ENCODE measurements at regions of chr18 and their contacts with region 1.

Region 1: DNA sequence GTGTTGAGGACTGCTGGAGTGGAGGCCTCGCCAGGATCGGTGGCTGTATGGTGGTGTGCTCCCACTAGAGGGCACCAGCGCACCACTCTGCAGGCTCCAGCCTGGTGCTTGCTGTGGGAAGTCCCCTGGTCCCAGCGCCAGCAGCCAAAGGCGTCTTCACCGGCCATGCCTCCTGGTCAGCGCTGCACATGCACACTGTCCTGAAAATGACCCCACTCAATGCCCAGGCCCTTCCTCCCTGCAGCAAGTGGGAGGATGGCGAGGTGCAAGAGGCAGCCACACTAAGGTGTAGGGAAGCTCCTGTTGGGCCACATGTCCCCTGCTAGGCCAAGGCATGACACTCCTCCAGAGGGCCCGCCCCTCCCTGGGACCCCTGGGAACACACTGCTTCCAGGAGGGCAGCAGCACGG is 136.5 kb downstream of the CTIF start:
- DNase-seq: peak; percentile 81
- H3K4me3 Mint-ChIP-seq: no peak overlapping the region
- H3K27ac Mint-ChIP-seq: no peak overlapping the region
- H3K4me1 Mint-ChIP-seq: no peaks in the 10 kb centered on the region
- H3K27me3 Mint-ChIP-seq: no peaks in the 10 kb centered on the region
- CTCF ChIP-seq: peak; percentile 94

Region 2: DNA sequence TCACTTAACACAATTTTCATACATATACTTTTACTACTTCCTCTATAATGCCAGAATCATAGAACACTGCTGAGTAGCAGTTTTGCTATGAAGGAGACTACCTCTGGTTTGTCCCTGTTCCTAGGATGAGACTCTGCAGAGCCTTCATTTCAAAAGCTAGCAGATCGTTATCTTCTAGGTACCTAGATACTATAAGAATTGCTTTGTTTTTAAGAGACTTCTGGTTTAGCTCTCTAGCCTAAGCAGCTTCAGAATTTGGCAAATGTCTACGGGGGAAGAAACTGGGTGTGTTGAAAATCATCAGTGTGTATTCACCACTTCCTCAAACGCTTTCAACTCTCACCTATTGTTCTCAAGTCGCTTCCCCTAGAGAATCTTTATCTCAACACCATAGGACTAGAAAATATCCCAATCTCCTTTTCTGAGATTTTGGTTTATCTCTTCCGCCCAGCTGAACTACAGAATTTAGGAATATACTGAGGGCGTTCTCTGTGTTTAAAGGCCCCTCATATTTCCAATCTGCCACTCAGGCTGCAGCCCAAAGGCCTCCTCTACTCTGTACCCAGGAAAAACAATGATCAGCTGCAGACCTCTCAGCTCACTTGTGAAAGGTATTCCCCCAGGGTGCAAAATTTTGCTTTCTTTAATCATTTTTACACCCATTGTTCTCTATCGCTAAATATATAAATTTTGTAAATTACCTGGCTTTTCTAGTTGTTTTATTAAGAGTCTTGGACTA is 773.6 kb before region 1 on chr18:
- CTCF ChIA-PET with region 1: no interaction called
- POLR2A ChIA-PET with region 1: no interaction called
- intact Hi-C with region 1: no loop called
- DNase-seq: no peak
- H3K4me3 Mint-ChIP-seq: no peak overlapping the region
- H3K27ac Mint-ChIP-seq: no peak overlapping the region
- H3K4me1 Mint-ChIP-seq: peaks cover 30% of the 10 kb centered on the region
- H3K27me3 Mint-ChIP-seq: no peaks in the 10 kb centered on the region
- CTCF ChIP-seq: no peak

Region 3: GRCh38 chr18:48475635-48476549 is 199.5 kb before region 1 on chr18:
- CTCF ChIA-PET with region 1: interaction called, 21 read pairs
- POLR2A ChIA-PET with region 1: no interaction called
- intact Hi-C with region 1: no loop called
- DNase-seq: peak; percentile 71
- H3K4me3 Mint-ChIP-seq: no peak overlapping the region
- H3K27ac Mint-ChIP-seq: no peak overlapping the region
- H3K4me1 Mint-ChIP-seq: peaks cover 5% of the 10 kb centered on the region
- H3K27me3 Mint-ChIP-seq: peaks cover 16% of the 10 kb centered on the region
- CTCF ChIP-seq: peak; percentile 86

Region 4: DNA sequence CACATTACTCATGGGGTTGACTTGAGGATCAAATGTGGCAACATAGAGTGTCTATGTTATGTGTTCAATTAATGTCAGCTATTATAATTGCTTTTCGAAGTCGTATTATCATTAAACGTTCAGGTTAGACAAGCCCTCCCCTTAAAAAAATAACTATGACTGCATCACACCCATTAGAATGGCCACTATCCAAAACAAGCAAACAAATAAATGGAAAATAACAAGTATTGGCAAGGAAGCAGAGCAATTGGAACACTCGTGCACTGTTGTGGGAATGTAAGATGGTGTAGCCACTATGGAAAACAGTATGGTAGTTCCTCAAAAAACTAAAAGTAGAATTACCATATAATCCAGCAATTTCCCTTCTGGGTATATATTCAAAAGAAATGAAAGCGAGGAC is 146.5 kb before region 1 on chr18:
- CTCF ChIA-PET with region 1: no interaction called
- POLR2A ChIA-PET with region 1: no interaction called
- intact Hi-C with region 1: no loop called
- DNase-seq: no peak
- H3K4me3 Mint-ChIP-seq: no peak overlapping the region
- H3K27ac Mint-ChIP-seq: no peak overlapping the region
- H3K4me1 Mint-ChIP-seq: peaks cover 12% of the 10 kb centered on the region
- H3K27me3 Mint-ChIP-seq: peaks cover 30% of the 10 kb centered on the region
- CTCF ChIP-seq: no peak

Region 5: DNA sequence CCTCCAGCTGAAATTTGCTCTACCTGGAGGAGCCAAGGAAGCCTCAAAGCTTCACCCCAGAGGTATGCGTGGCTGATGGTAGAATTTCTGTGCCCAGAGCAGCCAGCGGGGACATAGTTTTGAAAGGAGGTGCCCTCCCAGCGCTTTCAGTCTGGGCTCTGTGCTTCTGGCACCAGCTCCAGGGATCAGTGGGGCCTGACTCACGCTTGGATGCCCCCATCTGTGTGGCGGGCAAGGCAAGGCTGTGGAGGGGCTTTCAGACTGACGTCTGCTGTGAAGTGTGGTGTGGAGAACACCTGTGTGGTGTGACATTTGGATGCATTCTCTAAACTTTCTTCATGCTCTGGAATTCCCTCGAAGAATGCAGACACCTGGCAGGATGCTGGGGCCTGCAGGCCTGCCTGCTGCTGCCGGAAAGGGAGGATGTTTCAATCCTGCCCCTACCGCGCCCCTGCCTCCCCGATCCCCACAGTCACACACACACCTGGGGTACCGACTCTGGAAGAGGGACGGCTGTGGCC is 52.4 kb before region 1 on chr18:
- CTCF ChIA-PET with region 1: no interaction called
- POLR2A ChIA-PET with region 1: no interaction called
- intact Hi-C with region 1: no loop called
- DNase-seq: peak; percentile 25
- H3K4me3 Mint-ChIP-seq: peak overlapping the region; percentile 16
- H3K27ac Mint-ChIP-seq: peak overlapping the region; percentile 87
- H3K4me1 Mint-ChIP-seq: peaks cover 54% of the 10 kb centered on the region
- H3K27me3 Mint-ChIP-seq: no peaks in the 10 kb centered on the region
- CTCF ChIP-seq: no peak

Region 6: GRCh38 chr18:48777026-48777743 is 101.8 kb after region 1 on chr18:
- CTCF ChIA-PET with region 1: interaction called, 3 read pairs
- POLR2A ChIA-PET with region 1: no interaction called
- intact Hi-C with region 1: loop called (anchors 10 kb)
- DNase-seq: peak; percentile 59
- H3K4me3 Mint-ChIP-seq: no peak overlapping the region
- H3K27ac Mint-ChIP-seq: no peak overlapping the region
- H3K4me1 Mint-ChIP-seq: peaks cover 4% of the 10 kb centered on the region
- H3K27me3 Mint-ChIP-seq: no peaks in the 10 kb centered on the region
- CTCF ChIP-seq: peak; percentile 84

Region 7: DNA sequence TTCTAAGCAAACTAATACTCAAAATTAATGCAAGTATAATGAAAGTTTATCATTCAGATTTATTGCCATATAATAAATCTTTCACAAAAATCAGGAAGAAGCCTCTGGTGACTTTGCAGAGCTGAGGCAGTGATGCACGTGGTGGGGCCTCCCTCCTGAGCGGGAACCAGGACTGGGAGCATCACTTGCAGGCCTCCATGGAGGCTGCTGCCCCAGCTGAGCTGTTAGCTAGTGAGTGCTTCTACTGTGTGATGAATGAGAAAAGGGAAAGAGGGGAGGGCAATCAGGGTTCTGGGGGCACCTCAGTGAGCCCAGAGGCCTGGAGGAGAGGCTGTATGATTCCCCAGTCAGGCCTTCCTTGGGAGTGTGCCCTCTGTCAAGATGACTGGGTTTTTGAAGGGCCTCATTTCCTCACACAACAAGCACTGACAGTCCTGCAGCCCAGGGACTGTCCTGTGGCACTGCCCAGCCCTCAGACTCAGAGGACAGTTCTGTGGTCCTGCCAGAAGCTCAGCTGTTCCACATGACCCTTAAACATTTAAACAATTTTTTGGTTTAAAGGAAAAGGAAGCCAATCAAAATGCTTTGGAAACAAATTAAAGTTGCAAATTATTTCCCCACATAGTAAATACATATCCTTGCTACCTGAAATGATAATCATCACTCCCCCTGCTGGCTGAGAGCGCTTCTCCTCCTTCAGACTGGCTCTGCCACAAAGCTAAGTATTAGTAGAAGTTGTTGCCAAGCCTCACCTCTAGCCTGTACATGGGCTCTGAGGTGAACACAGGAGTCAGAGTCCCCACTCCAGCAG is 366.3 kb after region 1 on chr18:
- CTCF ChIA-PET with region 1: interaction called, 8 read pairs
- POLR2A ChIA-PET with region 1: no interaction called
- intact Hi-C with region 1: loop called (anchors 5 kb)
- DNase-seq: peak; percentile 54
- H3K4me3 Mint-ChIP-seq: no peak overlapping the region
- H3K27ac Mint-ChIP-seq: no peak overlapping the region
- H3K4me1 Mint-ChIP-seq: no peaks in the 10 kb centered on the region
- H3K27me3 Mint-ChIP-seq: no peaks in the 10 kb centered on the region
- CTCF ChIP-seq: peak; percentile 52

Region 8: DNA sequence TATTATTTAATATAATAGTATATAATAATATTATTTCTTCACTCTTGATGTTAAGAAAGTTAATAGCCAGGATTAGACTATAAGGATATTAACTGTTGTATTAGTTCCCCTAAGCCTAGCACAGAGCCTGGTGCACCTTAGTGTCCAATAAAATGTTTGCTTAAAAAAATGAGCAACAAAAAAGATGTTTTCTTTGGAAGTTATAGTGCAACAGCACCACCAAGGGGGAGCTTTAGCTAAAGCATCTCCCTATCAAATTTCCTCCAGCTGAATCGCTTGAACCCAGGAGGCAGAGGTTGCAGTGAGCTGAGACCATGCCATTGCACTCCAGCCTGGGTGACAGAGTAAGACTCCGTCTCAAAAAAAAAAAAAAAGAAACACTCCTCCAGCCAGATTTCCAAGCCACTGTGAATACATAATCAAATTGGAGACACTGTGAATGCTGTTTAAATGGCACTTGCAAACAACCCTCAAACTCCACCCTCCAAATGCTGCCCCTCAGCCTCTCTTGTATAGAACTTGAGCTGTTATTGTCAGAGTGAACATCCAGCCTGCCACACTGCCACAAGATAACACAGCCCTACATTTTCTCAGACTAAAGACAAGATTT is 563.2 kb after region 1 on chr18:
- CTCF ChIA-PET with region 1: interaction called, 5 read pairs
- POLR2A ChIA-PET with region 1: no interaction called
- intact Hi-C with region 1: loop called (anchors 1 kb)
- DNase-seq: peak; percentile 48
- H3K4me3 Mint-ChIP-seq: no peak overlapping the region
- H3K27ac Mint-ChIP-seq: no peak overlapping the region
- H3K4me1 Mint-ChIP-seq: no peaks in the 10 kb centered on the region
- H3K27me3 Mint-ChIP-seq: no peaks in the 10 kb centered on the region
- CTCF ChIP-seq: peak; percentile 51

Region 9: GRCh38 chr18:49486953-49487710 is 811.8 kb after region 1 on chr18 and contains the start of gene C18orf32:
- CTCF ChIA-PET with region 1: interaction called, 4 read pairs
- POLR2A ChIA-PET with region 1: no interaction called
- intact Hi-C with region 1: loop called (anchors 2 kb)
- DNase-seq: peak; percentile 95
- H3K4me3 Mint-ChIP-seq: peak within 1 kb of the TSS; percentile 99
- H3K27ac Mint-ChIP-seq: peak within 1 kb of the TSS; percentile 95
- H3K4me1 Mint-ChIP-seq: peaks cover 28% of the 10 kb centered on the region
- H3K27me3 Mint-ChIP-seq: no peaks in the 10 kb centered on the region
- CTCF ChIP-seq: no peak
- total RNA-seq, gene C18orf32: 28.9 and 45.2 TPM in 2 replicates